ENCODE measurements at regions of chr4 and their contacts with region 1.

Region 1: GRCh38 chr4:103091601-103092223 is 7.9 kb downstream of the BDH2 start:
- DNase-seq: peak; percentile 62
- H3K4me3 Mint-ChIP-seq: no peak overlapping the region
- H3K27ac Mint-ChIP-seq: no peak overlapping the region
- H3K4me1 Mint-ChIP-seq: peaks cover 11% of the 10 kb centered on the region
- H3K27me3 Mint-ChIP-seq: no peaks in the 10 kb centered on the region

Region 2: GRCh38 chr4:102255454-102255853 is 836.3 kb before region 1 on chr4:
- CTCF ChIA-PET with region 1: no interaction called
- intact Hi-C with region 1: loop called (anchors 2 kb)
- DNase-seq: no peak
- H3K4me3 Mint-ChIP-seq: no peak overlapping the region
- H3K27ac Mint-ChIP-seq: no peak overlapping the region
- H3K4me1 Mint-ChIP-seq: no peaks in the 10 kb centered on the region
- H3K27me3 Mint-ChIP-seq: no peaks in the 10 kb centered on the region

Region 3: GRCh38 chr4:102449751-102450352 is 641.9 kb before region 1 on chr4:
- CTCF ChIA-PET with region 1: interaction called, 6 read pairs
- intact Hi-C with region 1: loop called (anchors 2 kb)
- DNase-seq: peak; percentile 76
- H3K4me3 Mint-ChIP-seq: no peak overlapping the region
- H3K27ac Mint-ChIP-seq: no peak overlapping the region
- H3K4me1 Mint-ChIP-seq: peaks cover 18% of the 10 kb centered on the region
- H3K27me3 Mint-ChIP-seq: no peaks in the 10 kb centered on the region

Region 4: DNA sequence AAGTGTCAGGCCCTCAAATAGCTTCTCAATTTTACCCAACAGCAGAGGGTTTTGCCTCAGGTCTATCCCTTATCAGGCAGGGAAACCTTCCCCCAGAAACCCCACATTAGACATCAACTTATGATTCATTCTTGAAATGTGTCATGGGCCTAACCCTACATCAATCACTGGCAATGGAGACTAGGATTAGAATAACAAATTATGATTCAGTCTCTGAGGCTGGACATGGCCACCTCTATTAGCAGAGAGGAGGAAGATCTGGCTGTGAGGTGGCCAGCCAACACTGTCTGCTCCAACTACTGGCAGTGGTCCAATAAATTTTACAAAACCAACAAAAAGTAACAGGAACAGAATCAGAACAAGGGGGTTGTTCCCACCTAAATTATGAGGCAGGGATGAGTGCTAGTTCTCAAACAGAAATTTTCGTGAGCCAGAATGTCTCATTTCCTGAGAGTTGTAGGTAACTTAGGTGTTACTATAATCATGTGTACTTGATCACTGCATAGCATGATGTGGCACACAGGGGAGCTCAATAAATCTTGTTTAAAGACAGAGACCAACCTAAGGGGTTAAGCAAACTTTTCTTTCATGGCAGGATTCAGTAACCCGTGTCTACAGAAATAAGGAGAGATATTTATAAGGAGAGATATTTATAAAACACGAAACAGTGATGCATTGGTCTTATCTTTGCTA is 463.7 kb before region 1 on chr4:
- CTCF ChIA-PET with region 1: interaction called, 10 read pairs
- intact Hi-C with region 1: no loop called
- DNase-seq: peak; percentile 62
- H3K4me3 Mint-ChIP-seq: peak overlapping the region; percentile 22
- H3K27ac Mint-ChIP-seq: peak overlapping the region; percentile 54
- H3K4me1 Mint-ChIP-seq: peaks cover 75% of the 10 kb centered on the region
- H3K27me3 Mint-ChIP-seq: no peaks in the 10 kb centered on the region

Region 5: GRCh38 chr4:103019308-103020124 is 72.2 kb before region 1 on chr4 and contains the start of gene SLC9B1:
- CTCF ChIA-PET with region 1: interaction called, 4 read pairs
- intact Hi-C with region 1: loop called (anchors 1 kb)
- DNase-seq: peak; percentile 96
- H3K4me3 Mint-ChIP-seq: peak within 1 kb of the TSS; percentile 96
- H3K27ac Mint-ChIP-seq: peak within 1 kb of the TSS; percentile 97
- H3K4me1 Mint-ChIP-seq: peaks cover 20% of the 10 kb centered on the region
- H3K27me3 Mint-ChIP-seq: no peaks in the 10 kb centered on the region
- total RNA-seq, gene SLC9B1: 2.0 to 3.5 TPM

Region 6: DNA sequence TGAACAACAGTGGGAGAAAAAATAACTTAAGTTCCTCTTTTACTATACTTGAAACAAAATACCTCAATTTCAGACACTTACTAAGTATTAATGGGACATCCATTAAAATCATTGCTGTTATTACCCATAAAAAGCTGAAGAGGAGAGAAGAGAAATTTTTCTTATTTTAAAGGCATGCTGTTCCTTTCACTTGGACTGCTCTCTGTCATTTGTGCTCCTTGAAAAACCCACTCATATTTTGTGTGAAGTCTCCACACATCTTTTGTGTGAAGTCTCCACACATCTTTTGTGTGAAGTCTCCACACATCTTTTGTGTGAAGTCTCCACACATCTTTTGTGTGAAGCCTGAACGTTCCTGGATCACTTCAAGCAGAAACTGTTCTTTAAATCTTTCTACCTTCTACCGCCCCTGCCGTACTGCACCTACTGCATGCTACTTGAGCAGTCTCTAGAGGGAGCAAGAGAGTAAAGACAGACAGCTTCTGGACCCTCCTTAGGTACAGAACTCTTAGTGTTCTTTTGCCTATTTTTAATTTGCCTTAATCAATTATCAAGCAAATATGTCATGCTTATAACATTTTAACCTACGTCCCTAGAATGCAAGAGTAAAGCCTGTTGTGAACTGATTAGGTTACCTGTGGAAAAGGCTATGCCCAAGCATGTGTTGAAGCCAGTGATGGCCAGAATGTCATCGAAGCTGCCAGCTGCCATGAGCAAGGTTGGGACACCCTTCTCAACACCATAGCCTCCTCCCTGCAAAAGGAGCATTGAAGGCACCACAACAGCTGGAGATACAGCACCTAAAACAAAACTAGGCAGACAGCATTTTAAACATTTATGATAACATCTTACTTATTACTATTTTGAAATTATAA is 45.1 kb before region 1 on chr4:
- CTCF ChIA-PET with region 1: interaction called, 69 read pairs
- intact Hi-C with region 1: loop called (anchors 1 kb)
- DNase-seq: peak; percentile 42
- H3K4me3 Mint-ChIP-seq: no peak overlapping the region
- H3K27ac Mint-ChIP-seq: no peak overlapping the region
- H3K4me1 Mint-ChIP-seq: peaks cover 10% of the 10 kb centered on the region
- H3K27me3 Mint-ChIP-seq: no peaks in the 10 kb centered on the region